ENCODE measurements at regions of chr17 and their contacts with region 1.

Region 1: GRCh38 chr17:4966844-4967538 is 626 bp downstream of the SPAG7 start:
- DNase-seq: peak; percentile 90 to 98 (median 97)
- H3K4me3 ChIP-seq: peak overlapping the region; percentile 100
- H3K4me3 Mint-ChIP-seq: no peak overlapping the region
- H3K27ac ChIP-seq: peak overlapping the region; percentile 76
- H3K27ac Mint-ChIP-seq: peak overlapping the region in 2 of 8 donors; percentile 8 to 80
- H3K4me1 ChIP-seq: peaks cover 20% of the 10 kb centered on the region
- H3K4me1 Mint-ChIP-seq: peaks cover 16 to 20% (median 20%) of the 10 kb centered on the region in 3 donors
- H3K27me3 ChIP-seq: no peaks in the 10 kb centered on the region
- H3K27me3 Mint-ChIP-seq: no peaks in the 10 kb centered on the region

Region 2: DNA sequence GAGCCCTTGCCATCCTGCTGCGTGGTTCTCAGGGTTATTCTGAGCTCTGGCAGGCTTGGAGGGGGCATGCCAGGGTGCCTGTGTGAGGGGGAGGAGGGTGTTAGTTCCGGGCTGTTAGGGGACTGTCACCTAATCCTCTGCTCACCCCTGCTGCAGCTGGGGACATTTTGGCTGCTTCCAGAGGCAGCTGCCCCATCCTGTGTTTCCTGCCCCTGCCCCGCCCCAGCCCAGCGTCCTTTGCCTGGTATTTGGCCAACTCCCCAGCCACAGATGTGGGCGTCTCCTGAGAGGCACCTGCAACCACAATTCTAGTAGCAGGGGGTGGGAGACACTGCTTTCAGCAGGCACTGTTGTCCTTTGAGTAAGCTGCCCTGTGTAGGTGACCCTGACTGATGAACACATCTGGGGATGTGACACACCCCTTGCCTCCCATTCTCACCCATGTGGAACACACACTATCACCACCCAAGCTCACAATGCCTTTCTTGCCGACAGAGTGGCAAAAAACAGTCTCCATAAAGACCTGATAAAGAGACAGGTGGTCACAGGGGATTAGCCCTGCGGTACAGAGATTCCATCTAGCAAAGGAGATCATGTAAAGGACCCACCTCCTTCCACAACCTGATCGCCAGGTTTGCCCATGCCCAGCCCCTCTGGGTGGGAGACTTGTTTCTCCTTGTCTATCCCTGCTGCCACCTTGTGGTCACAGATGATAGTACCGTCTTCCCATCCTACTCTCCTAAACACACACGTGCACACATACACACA is 63.8 kb before region 1 on chr17 and contains the start of gene CHRNE:
- CTCF ChIA-PET with region 1: interaction called, 16 read pairs
- POLR2A ChIA-PET with region 1: interaction called, 19 read pairs
- DNase-seq: peak; percentile 63 to 82 (median 71)
- H3K4me3 ChIP-seq: peak within 1 kb of the TSS; percentile 61
- H3K4me3 Mint-ChIP-seq: peak within 1 kb of the TSS; percentile 70 to 86 (median 79)
- H3K27ac ChIP-seq: peak within 1 kb of the TSS; percentile 58
- H3K27ac Mint-ChIP-seq: peak within 1 kb of the TSS; percentile 83 to 96 (median 92)
- H3K4me1 ChIP-seq: peaks cover 46% of the 10 kb centered on the region
- H3K4me1 Mint-ChIP-seq: peaks cover 28 to 58% (median 35%) of the 10 kb centered on the region in 3 donors
- H3K27me3 ChIP-seq: no peaks in the 10 kb centered on the region
- H3K27me3 Mint-ChIP-seq: peaks cover 0 to 7% of the 10 kb centered on the region in 2 donors
- total RNA-seq, gene CHRNE: 0.37 to 0.38 TPM

Region 3: GRCh38 chr17:4939796-4940624 is 27.0 kb before region 1 on chr17 and contains the starts of genes RNF167 and SLC25A11:
- CTCF ChIA-PET with region 1: interaction called, 34 read pairs
- POLR2A ChIA-PET with region 1: interaction called, 187 read pairs
- DNase-seq: peak; percentile 89 to 99 (median 97)
- H3K4me3 ChIP-seq: peak within 1 kb of the TSS; percentile 97
- H3K4me3 Mint-ChIP-seq: peak within 1 kb of the TSS; percentile 86 to 97 (median 96)
- H3K27ac ChIP-seq: peak within 1 kb of the TSS; percentile 85
- H3K27ac Mint-ChIP-seq: peak within 1 kb of the TSS; percentile 89 to 98 (median 96)
- H3K4me1 ChIP-seq: peaks cover 57% of the 10 kb centered on the region
- H3K4me1 Mint-ChIP-seq: peaks cover 56 to 79% (median 56%) of the 10 kb centered on the region in 3 donors
- H3K27me3 ChIP-seq: no peaks in the 10 kb centered on the region
- H3K27me3 Mint-ChIP-seq: peaks cover 0 to 4% of the 10 kb centered on the region in 2 donors
- total RNA-seq, gene RNF167: 187 to 192 TPM
- total RNA-seq, gene SLC25A11: 90.0 to 101 TPM

Region 4: GRCh38 chr17:4956493-4957061 is 10.4 kb before region 1 on chr17:
- CTCF ChIA-PET with region 1: interaction called, 30 read pairs
- POLR2A ChIA-PET with region 1: interaction called, 187 read pairs
- DNase-seq: peak in 2 of 5 donors; percentile 25 to 65
- H3K4me3 ChIP-seq: no peak overlapping the region
- H3K4me3 Mint-ChIP-seq: peak overlapping the region in 1 of 7 donors; percentile 56
- H3K27ac ChIP-seq: no peak overlapping the region
- H3K27ac Mint-ChIP-seq: peak overlapping the region in 2 of 8 donors; percentile 57 to 69
- H3K4me1 ChIP-seq: no peaks in the 10 kb centered on the region
- H3K4me1 Mint-ChIP-seq: peaks cover 0 to 8% (median 6%) of the 10 kb centered on the region in 3 donors
- H3K27me3 ChIP-seq: no peaks in the 10 kb centered on the region
- H3K27me3 Mint-ChIP-seq: no peaks in the 10 kb centered on the region

Region 5: DNA sequence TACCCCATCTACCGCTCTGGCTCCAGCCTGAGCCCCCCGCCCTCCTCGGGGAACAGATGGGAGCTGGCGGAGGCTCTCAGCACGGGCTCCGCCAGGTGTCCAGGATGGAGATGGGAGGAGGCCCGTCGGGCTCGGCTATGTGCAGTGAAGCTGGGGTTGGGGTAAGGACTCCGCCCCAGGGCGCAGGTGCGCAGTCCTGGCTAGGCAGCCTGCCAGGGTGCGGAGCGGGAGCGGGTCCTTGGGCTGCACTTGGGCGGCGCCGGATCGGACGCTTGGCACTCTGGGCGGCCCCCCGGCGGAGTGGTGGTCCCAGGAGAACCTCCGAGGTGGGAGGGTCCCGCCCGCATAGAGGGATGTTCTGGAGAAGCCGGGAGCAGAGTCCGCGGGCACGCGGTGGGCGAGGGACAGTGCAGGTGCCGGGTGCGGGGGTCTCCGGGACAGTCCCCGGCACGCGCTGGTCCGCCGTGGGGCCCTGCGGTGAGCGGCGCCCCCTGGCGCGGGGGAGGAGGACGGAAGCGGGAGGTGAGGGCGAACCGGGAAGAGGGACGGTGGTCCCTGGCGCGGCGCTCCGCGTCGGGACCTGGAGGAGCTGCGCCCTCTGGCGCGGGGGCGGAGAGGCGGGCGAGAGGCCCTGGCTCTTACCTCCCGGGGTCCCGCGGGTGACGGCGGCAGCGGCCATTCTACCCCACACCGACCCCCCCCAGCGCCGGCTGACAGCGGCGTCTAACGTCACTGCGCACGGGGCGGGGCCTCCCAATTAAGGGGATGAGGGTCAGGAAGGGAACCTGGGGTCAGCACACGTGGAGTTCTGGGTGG is 20.2 kb after region 1 on chr17 and contains the start of gene CAMTA2:
- CTCF ChIA-PET with region 1: interaction called, 18 read pairs
- POLR2A ChIA-PET with region 1: interaction called, 6 read pairs
- DNase-seq: peak; percentile 80 to 92 (median 87)
- H3K4me3 ChIP-seq: peak within 1 kb of the TSS; percentile 94
- H3K4me3 Mint-ChIP-seq: peak within 1 kb of the TSS; percentile 91 to 96 (median 93)
- H3K27ac ChIP-seq: peak within 1 kb of the TSS; percentile 88
- H3K27ac Mint-ChIP-seq: peak within 1 kb of the TSS; percentile 87 to 98 (median 95)
- H3K4me1 ChIP-seq: peaks cover 33% of the 10 kb centered on the region
- H3K4me1 Mint-ChIP-seq: peaks cover 31 to 46% (median 42%) of the 10 kb centered on the region in 3 donors
- H3K27me3 ChIP-seq: no peaks in the 10 kb centered on the region
- H3K27me3 Mint-ChIP-seq: peaks cover 0 to 1% of the 10 kb centered on the region in 2 donors
- total RNA-seq, gene CAMTA2: 85.6 to 90.6 TPM

Region 6: GRCh38 chr17:5065227-5065744 is 98.3 kb after region 1 on chr17:
- CTCF ChIA-PET with region 1: interaction called, 10 read pairs
- POLR2A ChIA-PET with region 1: no interaction called
- DNase-seq: no peak
- H3K4me3 ChIP-seq: no peak overlapping the region
- H3K4me3 Mint-ChIP-seq: no peak overlapping the region
- H3K27ac ChIP-seq: no peak overlapping the region
- H3K27ac Mint-ChIP-seq: no peak overlapping the region
- H3K4me1 ChIP-seq: no peaks in the 10 kb centered on the region
- H3K4me1 Mint-ChIP-seq: peaks cover 0 to 7% (median 6%) of the 10 kb centered on the region in 3 donors
- H3K27me3 ChIP-seq: no peaks in the 10 kb centered on the region
- H3K27me3 Mint-ChIP-seq: peaks cover 0 to 1% of the 10 kb centered on the region in 2 donors

Measured in CD8-positive, alpha-beta memory T cell (primary cell).